Activated T-helper 1 cell treated with anti-CD3 and anti-CD28 coated beads, Interleukin-12 subunit alpha, Interleukin-12 subunit beta, Interleukin-2, Interleukin-4 antibody, amounts not matched to agents 30 ng/mL and 10 ng/mL and 1 ng/mL, durations not matched to agents 14 hours and 24 hours and 36 hours (primary cell): ENCODE measurements at regions of chr19 and their contacts with region 1.

Region 1: DNA sequence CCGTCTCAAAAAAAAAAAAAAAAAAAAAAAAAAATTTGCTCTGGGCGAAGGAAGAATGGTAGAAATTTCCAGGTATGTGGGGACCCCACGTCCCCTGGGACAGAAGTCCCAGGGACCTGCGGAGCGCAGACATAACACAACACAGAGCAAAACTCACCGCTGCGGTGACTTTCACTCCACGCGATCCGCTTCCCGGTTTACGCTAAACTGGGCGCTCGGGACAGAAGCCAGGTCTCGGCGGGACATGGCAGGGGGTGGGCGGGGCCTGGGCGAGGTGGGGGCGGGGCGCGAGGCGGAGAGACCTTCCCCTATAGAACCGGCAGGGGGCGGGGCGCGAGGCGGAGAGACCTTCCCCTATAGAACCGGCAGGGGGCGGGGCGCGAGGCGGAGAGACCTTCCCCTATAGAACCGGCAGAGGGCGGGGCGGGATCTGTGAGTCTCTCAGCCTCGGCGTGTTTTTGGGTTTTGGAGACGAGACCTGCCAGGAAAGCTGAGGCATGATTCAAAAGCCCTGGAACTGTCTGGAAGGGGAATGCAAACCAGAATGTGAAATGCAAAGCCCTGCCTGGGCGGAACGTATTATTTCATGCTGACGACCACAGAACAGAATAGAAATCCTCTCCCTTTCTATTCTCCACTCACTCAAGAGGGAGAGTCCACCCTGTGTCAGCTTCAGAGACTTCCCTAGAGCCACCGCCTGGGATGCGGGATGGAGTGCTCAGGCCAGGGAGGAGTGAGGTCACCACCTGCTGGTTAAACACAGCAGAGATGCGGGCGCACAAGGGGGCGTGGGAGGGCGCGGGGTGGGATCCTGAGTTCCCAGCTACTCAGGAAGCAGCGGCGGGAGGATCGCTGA is 20.2 kb upstream of the ERVV-1 start:
- DNase-seq: peak; percentile 79
- H3K4me3 Mint-ChIP-seq: peak overlapping the region; percentile 82
- H3K27ac Mint-ChIP-seq: no peak overlapping the region
- H3K4me1 Mint-ChIP-seq: peaks cover 6% of the 10 kb centered on the region
- H3K27me3 Mint-ChIP-seq: peaks cover 4% of the 10 kb centered on the region

Region 2: GRCh38 chr19:52922841-52923777 is 70.4 kb before region 1 on chr19 and contains the start of gene ZNF888:
- intact Hi-C with region 1: loop called (anchors 2 kb)
- DNase-seq: peak; percentile 77
- H3K4me3 Mint-ChIP-seq: peak within 1 kb of the TSS; percentile 93
- H3K27ac Mint-ChIP-seq: peak within 1 kb of the TSS; percentile 96
- H3K4me1 Mint-ChIP-seq: peaks cover 31% of the 10 kb centered on the region
- H3K27me3 Mint-ChIP-seq: no peaks in the 10 kb centered on the region
- total RNA-seq, gene ZNF888: 4.2 and 4.6 TPM in 2 replicates

Region 3: GRCh38 chr19:53007611-53008010 is 14.1 kb after region 1 on chr19:
- intact Hi-C with region 1: no loop called
- DNase-seq: no peak
- H3K4me3 Mint-ChIP-seq: no peak overlapping the region
- H3K27ac Mint-ChIP-seq: no peak overlapping the region
- H3K4me1 Mint-ChIP-seq: no peaks in the 10 kb centered on the region
- H3K27me3 Mint-ChIP-seq: no peaks in the 10 kb centered on the region

Region 4: GRCh38 chr19:53045546-53045945 is 52.0 kb after region 1 on chr19:
- intact Hi-C with region 1: no loop called
- DNase-seq: no peak
- H3K4me3 Mint-ChIP-seq: no peak overlapping the region
- H3K27ac Mint-ChIP-seq: no peak overlapping the region
- H3K4me1 Mint-ChIP-seq: no peaks in the 10 kb centered on the region
- H3K27me3 Mint-ChIP-seq: no peaks in the 10 kb centered on the region